Body of pancreas (tissue), 4 donors: ENCODE measurements at regions of chr3 and their contacts with region 1.

Region 1: DNA sequence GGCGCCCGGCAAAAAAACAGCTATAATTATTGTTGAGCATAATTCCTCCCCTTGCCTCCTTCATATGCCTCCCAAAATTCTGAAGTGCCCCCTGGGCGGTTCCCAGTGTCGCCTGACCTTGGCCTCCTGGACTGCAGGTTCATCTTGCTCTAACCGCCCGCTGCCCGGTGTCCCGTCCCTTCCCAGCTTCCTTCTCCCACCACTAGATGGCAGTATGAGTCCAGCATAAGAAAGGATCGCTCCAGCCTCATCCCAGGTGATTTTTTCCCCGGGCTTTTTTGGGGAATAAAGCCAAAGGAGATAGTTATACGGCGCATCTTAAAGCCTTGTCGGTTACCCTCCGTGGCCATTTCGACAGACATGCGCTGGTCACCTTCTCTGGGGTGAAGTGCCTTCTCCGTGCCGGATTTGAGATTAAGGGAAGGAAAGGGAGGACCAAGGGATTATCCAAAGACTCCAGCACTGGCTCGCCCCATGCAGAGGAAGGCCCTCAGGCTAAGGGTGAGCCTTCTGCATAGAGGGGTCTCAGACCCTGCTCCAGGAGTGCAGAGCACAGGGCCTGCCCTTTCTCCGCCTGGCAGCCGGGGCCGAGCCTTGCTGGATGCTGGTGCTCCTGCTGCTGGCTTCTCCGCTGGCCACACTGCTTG is 45.8 kb upstream of the TRA2B start:
- DNase-seq: peak; percentile 79 to 84 (median 82)
- ATAC-seq: peak; percentile 86
- H3K4me3 ChIP-seq: no peak overlapping the region
- H3K27ac ChIP-seq: no peak overlapping the region
- H3K4me1 ChIP-seq: peaks cover 4% of the 10 kb centered on the region
- H3K27me3 ChIP-seq: no peaks in the 10 kb centered on the region
- CTCF ChIP-seq: peak; percentile 77 to 97 (median 91)
- POLR2A ChIP-seq: no peak

Region 2: DNA sequence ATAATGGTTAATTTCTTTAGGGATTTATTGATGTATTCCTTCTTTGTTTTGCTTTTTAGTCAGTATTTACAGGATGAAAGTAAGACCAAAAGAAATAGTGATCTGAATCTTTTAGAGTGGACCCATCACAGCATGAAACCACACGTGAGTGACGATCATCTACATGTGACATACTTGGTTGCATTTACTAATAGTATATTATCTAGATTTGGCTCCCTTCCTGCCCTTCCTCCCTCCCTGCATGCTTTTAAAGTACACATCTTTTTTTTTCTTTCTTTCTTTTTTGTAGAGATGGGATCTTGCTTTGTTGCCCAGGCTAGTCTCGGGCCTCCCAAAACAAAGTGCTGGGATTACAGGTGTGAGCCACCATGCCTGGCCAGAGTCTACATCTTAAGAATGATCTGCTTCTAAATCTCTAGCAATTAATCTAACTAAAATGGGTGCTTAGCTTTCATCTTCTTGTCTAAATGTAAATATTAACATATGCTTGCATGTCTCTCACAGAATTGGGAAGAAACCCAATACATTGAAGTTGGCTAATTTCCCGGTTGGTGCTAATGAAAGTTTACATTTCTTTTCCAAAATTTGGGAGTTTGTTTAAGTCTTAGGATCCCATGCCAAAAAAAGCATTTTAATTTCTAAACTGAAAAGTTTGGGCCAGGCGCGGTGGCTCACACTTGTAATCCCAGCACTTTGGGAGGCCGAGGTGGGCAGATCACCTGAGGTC is 359.5 kb before region 1 on chr3:
- intact Hi-C with region 1: no loop called
- DNase-seq: no peak
- ATAC-seq: no peak
- H3K4me3 ChIP-seq: no peak overlapping the region
- H3K27ac ChIP-seq: no peak overlapping the region
- H3K4me1 ChIP-seq: no peaks in the 10 kb centered on the region
- H3K27me3 ChIP-seq: no peaks in the 10 kb centered on the region
- CTCF ChIP-seq: no peak
- POLR2A ChIP-seq: no peak

Region 3: DNA sequence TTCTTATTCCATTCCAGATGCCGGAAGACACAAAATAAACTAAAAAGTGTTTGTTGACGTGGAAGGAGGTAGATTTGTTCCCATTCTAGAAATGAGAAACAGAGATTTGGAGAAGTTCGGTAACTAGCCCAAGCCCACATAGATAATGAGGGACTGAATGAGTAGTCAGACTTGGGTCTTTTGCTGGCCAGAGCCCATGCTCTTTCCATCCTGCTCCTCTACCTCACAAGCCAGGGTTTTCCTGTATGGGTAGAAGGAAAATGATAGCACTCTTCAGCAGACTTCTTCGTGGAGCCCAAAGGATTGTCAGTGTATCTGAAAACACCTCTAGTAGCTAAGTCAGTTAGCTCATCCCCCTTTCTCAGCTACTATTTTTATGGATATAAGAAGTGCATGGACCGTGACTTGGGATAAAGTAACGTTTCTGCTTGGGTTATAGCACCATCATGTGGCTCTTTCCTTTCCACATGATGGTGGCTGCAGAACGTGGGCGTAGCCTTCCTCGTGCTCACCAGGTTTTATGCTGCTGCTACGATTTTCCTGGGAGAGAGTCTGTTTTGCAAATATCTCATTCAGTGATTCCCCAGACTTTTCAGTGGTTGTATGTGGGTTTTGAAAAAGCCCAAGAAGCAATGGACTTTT is 293.8 kb after region 1 on chr3:
- intact Hi-C with region 1: loop called (anchors 10 kb)
- DNase-seq: peak in 3 of 4 donors; percentile 22 to 31 (median 27)
- ATAC-seq: peak; percentile 38
- H3K4me3 ChIP-seq: no peak overlapping the region
- H3K27ac ChIP-seq: no peak overlapping the region
- H3K4me1 ChIP-seq: no peaks in the 10 kb centered on the region
- H3K27me3 ChIP-seq: no peaks in the 10 kb centered on the region
- CTCF ChIP-seq: peak in 5 of 7 experiments; percentile 39 to 72 (median 54)
- POLR2A ChIP-seq: no peak

Region 4: DNA sequence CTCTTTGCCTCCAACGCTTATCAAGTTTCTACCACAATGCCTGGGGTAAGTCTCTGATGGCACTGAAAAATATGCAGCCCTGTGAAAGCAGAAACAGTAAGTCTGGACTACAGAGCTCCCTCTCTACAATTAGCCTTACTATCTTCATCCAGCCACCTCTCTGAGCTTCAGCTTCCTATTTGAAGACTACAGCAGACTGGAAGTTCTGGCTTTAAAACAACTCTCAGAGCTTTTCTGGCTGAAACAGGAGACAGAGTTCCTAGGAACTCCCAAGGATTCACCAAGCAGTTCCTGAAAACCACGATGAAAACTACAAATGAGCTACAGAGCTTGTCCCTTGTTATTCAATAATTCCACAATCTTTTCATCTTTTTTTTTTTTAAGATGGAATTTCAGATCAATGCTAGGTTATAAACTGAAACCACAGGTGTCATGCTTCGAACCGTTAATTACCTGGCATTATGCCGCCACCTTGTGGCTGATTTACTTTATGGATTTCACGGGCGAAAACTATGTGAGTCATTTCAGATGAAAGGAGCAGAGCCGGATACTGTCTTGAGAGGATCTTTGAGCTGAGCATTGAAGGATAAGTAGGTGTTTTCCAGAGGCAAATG is 556.7 kb after region 1 on chr3:
- intact Hi-C with region 1: loop called (anchors 5 kb)
- DNase-seq: peak; percentile 80 to 86 (median 84)
- ATAC-seq: peak; percentile 97
- H3K4me3 ChIP-seq: no peak overlapping the region
- H3K27ac ChIP-seq: peak overlapping the region in 2 of 4 donors; percentile 16 to 29
- H3K4me1 ChIP-seq: peaks cover 10% of the 10 kb centered on the region
- H3K27me3 ChIP-seq: no peaks in the 10 kb centered on the region
- CTCF ChIP-seq: peak; percentile 36 to 94 (median 86)
- POLR2A ChIP-seq: no peak